GM12878 (cell line): ENCODE measurements at regions of chr14 and their contacts with region 1.

Region 1: DNA sequence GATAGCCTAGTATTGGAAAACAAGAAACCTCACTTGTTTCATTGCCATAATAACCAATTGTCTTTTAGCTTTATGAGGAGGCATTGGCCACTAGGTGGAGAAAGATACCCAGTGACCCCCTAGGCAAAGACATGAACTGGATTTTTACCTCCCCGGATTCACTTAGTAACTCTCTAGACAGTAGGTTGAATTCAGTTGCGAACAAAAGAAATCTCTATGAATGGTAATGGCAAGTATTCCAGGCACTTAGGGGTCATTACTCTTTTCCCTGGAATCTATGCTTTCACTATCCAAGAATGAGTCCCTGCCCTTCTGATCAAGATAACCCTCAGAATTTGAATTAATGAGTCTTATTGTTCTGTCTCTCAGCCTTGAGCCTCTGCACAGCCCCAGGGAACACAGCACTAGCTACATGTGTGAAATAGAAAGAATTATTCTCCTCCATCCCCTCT is 29.5 kb upstream of the RHOJ start:
- DNase-seq: no peak
- ATAC-seq: peak; percentile 58; the same call in 2 of the 3 replicates
- H3K4me3 ChIP-seq: no peak overlapping the region
- H3K27ac ChIP-seq: no peak overlapping the region
- H3K4me1 ChIP-seq: no peaks in the 10 kb centered on the region
- H3K27me3 ChIP-seq: no peaks in the 10 kb centered on the region
- CTCF ChIP-seq: peak; percentile 38 to 51 (median 43); a peak in 4 of 6 replicates
- EP300 ChIP-seq: no peak
- POLR2A ChIP-seq: no peak
- RAD21 ChIP-seq: peak; percentile 62

Region 2: GRCh38 chr14:63055631-63056030 is 119.2 kb before region 1 on chr14:
- CTCF ChIA-PET with region 1: no interaction called
- POLR2A ChIA-PET with region 1: no interaction called
- RAD21 ChIA-PET with region 1: no interaction called
- SMC1A ChIA-PET with region 1: no interaction called
- in situ Hi-C with region 1: no loop called
- intact Hi-C with region 1: no loop called
- DNase-seq: no peak
- ATAC-seq: no peak
- H3K4me3 ChIP-seq: no peak overlapping the region
- H3K27ac ChIP-seq: no peak overlapping the region
- H3K4me1 ChIP-seq: no peaks in the 10 kb centered on the region
- H3K27me3 ChIP-seq: no peaks in the 10 kb centered on the region
- CTCF ChIP-seq: no peak
- EP300 ChIP-seq: no peak
- POLR2A ChIP-seq: no peak
- RAD21 ChIP-seq: no peak

Region 3: GRCh38 chr14:63276492-63277342 is 101.9 kb after region 1 on chr14:
- CTCF ChIA-PET with region 1: interaction called, 6 read pairs
- POLR2A ChIA-PET with region 1: no interaction called
- RAD21 ChIA-PET with region 1: no interaction called
- SMC1A ChIA-PET with region 1: interaction called, 4 read pairs
- in situ Hi-C with region 1: no loop called
- intact Hi-C with region 1: loop called (anchors 2 kb)
- DNase-seq: no peak
- ATAC-seq: peak; percentile 78
- H3K4me3 ChIP-seq: no peak overlapping the region
- H3K27ac ChIP-seq: no peak overlapping the region
- H3K4me1 ChIP-seq: no peaks in the 10 kb centered on the region
- H3K27me3 ChIP-seq: peaks cover 0 to 3% of the 10 kb centered on the region in 2 experiments; a peak in 1 of 4 replicates
- CTCF ChIP-seq: peak; percentile 66 to 83 (median 74); a peak in 5 of 6 replicates
- EP300 ChIP-seq: no peak
- POLR2A ChIP-seq: no peak
- RAD21 ChIP-seq: peak; percentile 83